Activated CD4-positive, alpha-beta memory T cell treated with anti-CD3 and anti-CD28 coated beads for 36 hours (primary cell): ENCODE measurements at regions of chr3 and their contacts with region 1.

Region 1: DNA sequence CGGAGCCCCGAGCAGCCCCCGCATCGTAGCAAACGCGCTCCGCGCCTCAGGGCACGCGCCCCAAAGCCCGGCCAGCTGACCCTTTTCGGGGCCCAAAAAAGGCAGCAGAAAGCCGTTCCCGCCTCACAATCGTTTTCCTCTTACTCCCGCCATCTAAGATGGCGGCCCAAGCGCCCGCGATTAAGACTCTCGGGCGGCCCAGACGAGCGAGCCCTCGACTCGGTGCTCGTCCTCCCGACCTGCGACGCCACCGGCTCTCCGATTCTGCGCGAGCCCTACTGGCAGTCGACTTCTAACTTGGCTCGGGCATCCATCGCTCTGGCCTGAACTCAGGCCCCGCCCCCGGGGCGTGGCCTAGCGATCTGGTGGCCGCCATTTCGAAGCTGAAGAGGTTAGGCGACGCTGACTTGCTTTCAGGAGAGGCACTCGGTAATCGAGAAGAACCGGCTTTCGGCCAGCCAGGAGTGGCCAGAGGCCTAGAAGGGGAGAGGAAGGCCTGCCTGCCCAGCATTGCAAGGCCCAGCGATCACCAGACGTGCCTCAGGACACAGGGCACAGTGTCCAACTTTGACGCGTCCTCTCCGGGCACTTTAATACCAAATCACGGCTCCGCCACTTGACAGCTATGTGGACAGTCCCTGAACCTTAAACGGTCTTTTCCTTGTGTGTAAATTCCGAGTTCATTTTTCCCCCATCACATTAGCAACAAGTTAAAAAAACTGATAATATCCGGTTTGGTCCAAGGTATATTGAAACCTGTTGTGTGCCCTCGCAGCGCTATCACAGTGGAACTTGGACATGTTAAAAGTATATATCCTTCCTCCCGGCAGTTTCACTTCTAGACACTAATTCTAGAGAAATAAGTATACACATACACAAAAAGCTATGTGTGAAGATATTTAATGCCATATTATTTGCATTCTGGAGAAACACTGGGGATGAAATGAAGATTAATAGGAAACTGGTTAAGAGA is at the start of gene RAF1:
- DNase-seq: peak; percentile 98
- H3K4me3 Mint-ChIP-seq: peak within 1 kb of the TSS; percentile 88
- H3K27ac Mint-ChIP-seq: peak within 1 kb of the TSS; percentile 87
- H3K4me1 Mint-ChIP-seq: peaks cover 29% of the 10 kb centered on the region
- H3K27me3 Mint-ChIP-seq: no peaks in the 10 kb centered on the region
- total RNA-seq, gene RAF1: 64.6 to 66.9 TPM

Region 2: DNA sequence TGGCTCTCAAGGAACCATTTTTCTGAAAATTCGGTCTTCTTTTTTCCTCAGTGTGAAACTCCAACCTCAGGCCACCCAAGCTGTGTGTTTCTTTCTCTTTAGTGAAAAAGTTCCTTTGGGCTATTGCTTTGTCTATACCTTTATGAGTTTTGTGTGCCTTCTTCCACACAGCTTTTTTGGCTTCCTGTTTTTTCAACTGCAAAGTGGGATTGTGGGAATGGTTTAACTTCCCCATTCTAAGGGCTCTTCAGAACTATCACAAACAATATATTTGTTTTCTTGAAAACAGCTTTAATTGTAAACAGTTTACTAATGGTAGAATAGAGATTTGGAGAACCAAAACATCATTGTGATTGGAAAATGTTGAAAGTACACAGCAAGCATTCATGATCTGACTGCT is 649.6 kb before region 1 on chr3:
- CTCF ChIA-PET with region 1: no interaction called
- POLR2A ChIA-PET with region 1: no interaction called
- intact Hi-C with region 1: no loop called
- DNase-seq: no peak
- H3K4me3 Mint-ChIP-seq: no peak overlapping the region
- H3K27ac Mint-ChIP-seq: no peak overlapping the region
- H3K4me1 Mint-ChIP-seq: no peaks in the 10 kb centered on the region
- H3K27me3 Mint-ChIP-seq: peaks cover 2% of the 10 kb centered on the region

Region 3: GRCh38 chr3:12187448-12188327 is 476.5 kb before region 1 on chr3:
- CTCF ChIA-PET with region 1: no interaction called
- POLR2A ChIA-PET with region 1: no interaction called
- intact Hi-C with region 1: no loop called
- DNase-seq: peak; percentile 89
- H3K4me3 Mint-ChIP-seq: peak overlapping the region; percentile 59
- H3K27ac Mint-ChIP-seq: peak overlapping the region; percentile 99
- H3K4me1 Mint-ChIP-seq: peaks cover 41% of the 10 kb centered on the region
- H3K27me3 Mint-ChIP-seq: peaks cover 7% of the 10 kb centered on the region

Region 4: DNA sequence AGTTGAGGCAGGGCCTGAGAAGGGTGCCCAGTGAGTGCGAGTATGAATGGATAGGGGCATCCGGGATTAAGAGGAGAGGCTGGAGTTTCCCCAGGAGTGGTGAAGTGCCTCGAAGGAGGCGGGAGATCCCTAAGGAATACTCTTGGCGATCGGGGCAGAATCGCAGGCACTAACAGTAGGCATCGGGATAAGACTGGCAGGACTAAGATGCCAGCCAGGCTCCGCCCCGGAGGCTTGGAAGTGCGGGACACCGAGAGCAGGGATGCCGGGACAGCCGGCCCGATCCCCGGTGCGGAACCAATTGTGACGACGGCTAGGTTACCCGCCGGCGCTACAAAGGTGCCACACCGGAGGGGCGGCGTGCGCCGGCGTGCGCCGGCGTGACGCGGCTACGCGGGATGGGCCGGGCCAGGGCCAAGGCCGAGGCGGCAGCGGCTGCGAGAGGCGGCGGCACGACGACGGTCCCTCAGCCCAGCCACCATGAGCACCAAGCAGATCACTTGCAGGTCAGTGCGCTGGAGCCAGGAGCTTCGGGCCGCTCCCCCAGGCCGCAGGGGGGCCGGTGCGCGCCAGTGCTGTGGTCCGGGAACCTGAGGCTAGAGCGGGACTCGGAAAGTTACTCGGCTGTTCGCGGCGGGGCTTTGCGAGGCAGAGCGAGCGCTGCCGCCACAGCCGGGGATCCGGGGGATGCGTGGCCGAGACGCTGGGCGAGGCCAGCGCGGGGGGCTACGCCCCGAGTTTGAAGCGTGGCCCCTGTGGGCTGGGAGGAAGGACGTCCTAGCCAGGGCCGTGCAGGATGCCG is 107.3 kb before region 1 on chr3 and contains the start of gene MKRN2:
- CTCF ChIA-PET with region 1: no interaction called
- POLR2A ChIA-PET with region 1: interaction called, 3 read pairs
- intact Hi-C with region 1: loop called (anchors 1 kb)
- DNase-seq: peak; percentile 89
- H3K4me3 Mint-ChIP-seq: peak within 1 kb of the TSS; percentile 78
- H3K27ac Mint-ChIP-seq: peak within 1 kb of the TSS; percentile 91
- H3K4me1 Mint-ChIP-seq: peaks cover 57% of the 10 kb centered on the region
- H3K27me3 Mint-ChIP-seq: peaks cover 26% of the 10 kb centered on the region
- total RNA-seq, gene MKRN2: 28.5 to 30.1 TPM

Region 5: GRCh38 chr3:12611117-12611516 is 53.1 kb before region 1 on chr3:
- CTCF ChIA-PET with region 1: interaction called, 3 read pairs
- POLR2A ChIA-PET with region 1: interaction called, 16 read pairs
- intact Hi-C with region 1: loop called (anchors 1 kb)
- DNase-seq: no peak
- H3K4me3 Mint-ChIP-seq: no peak overlapping the region
- H3K27ac Mint-ChIP-seq: no peak overlapping the region
- H3K4me1 Mint-ChIP-seq: peaks cover 46% of the 10 kb centered on the region
- H3K27me3 Mint-ChIP-seq: no peaks in the 10 kb centered on the region

Region 6: DNA sequence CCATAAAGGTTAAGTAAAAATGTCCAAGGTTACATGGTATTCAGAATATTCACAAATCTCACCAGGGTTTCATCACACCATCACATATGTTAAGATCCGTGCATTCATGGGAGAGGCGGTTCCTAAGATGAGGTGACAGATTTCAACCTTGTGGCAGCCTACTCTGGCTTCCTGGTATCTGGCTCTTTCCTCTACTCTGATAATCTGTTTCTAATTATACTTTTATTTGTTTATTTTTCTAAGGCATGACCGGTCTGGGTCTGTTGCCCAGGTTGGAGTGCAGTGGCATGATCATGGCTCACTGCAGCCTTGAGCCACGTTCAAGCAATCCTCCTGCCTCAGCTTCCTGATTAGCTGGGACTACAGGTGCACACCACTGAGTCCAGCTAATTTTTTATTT is 34.7 kb before region 1 on chr3:
- CTCF ChIA-PET with region 1: no interaction called
- POLR2A ChIA-PET with region 1: no interaction called
- intact Hi-C with region 1: loop called (anchors 5 kb)
- DNase-seq: no peak
- H3K4me3 Mint-ChIP-seq: no peak overlapping the region
- H3K27ac Mint-ChIP-seq: no peak overlapping the region
- H3K4me1 Mint-ChIP-seq: peaks cover 50% of the 10 kb centered on the region
- H3K27me3 Mint-ChIP-seq: no peaks in the 10 kb centered on the region

Region 7: DNA sequence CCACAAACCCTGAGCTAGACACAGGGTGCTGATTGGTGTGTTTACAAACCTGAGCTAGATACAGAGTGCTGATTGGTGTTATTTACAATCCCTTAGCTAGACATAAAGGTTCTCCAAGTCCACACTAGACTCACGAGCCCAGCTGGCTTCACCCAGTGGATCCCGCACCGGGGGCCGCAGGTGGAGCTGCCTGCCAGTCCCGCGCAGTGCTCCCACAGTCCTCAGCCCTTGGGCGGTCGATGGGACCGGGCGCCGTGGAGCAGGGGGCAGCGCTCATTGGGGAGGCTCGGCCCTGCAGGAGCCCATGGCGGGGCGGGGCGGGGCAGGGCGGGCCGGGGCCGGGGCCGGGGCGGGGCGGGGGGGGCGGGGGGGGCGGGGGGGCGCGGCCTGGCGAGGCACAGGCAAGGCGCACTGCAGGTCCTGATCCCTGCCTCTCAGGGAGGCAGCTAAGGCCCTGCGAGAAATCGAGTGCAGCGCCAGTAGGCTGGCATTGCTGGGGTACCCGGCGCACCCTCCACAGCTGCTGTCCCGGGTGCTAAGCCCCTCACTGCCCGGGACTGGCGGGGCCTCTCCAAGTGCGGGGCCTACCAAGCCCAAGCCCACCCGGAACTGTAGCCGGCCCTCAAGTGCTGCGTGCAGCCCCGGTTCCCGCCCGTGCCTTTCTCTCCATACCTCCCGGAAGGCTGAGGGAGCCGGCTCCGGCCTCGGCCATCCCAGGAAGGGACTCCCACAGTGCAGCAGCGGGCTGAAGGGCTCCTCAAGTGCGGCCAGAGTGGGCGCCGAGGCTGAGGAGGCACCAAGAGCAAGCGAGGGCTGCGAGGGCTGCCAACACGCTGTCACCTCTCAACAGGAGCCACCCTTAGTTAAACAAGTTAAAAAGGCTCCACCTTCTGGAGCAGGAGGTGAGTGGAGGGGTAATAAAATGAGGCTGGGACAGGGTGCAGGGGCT is 104.6 kb after region 1 on chr3:
- CTCF ChIA-PET with region 1: no interaction called
- POLR2A ChIA-PET with region 1: no interaction called
- intact Hi-C with region 1: no loop called
- DNase-seq: no peak
- H3K4me3 Mint-ChIP-seq: no peak overlapping the region
- H3K27ac Mint-ChIP-seq: no peak overlapping the region
- H3K4me1 Mint-ChIP-seq: no peaks in the 10 kb centered on the region
- H3K27me3 Mint-ChIP-seq: peaks cover 2% of the 10 kb centered on the region

Region 8: GRCh38 chr3:13012228-13012691 is 348.0 kb after region 1 on chr3:
- CTCF ChIA-PET with region 1: no interaction called
- POLR2A ChIA-PET with region 1: no interaction called
- intact Hi-C with region 1: loop called (anchors 10 kb)
- DNase-seq: peak; percentile 83
- H3K4me3 Mint-ChIP-seq: peak overlapping the region; percentile 70
- H3K27ac Mint-ChIP-seq: peak overlapping the region; percentile 93
- H3K4me1 Mint-ChIP-seq: peaks cover 80% of the 10 kb centered on the region
- H3K27me3 Mint-ChIP-seq: no peaks in the 10 kb centered on the region